Psoas muscle (tissue), 8 donors: ENCODE measurements at regions of chr1 and their contacts with region 1.

Region 1: GRCh38 chr1:94926915-94927404 is at the start of gene CNN3:
- DNase-seq: peak; percentile 91 to 92
- ATAC-seq: peak; percentile 80 to 88 (median 88)
- H3K4me3 ChIP-seq: peak within 1 kb of the TSS; percentile 71
- H3K27ac ChIP-seq: peak within 1 kb of the TSS; percentile 80
- H3K4me1 ChIP-seq: peaks cover 5% of the 10 kb centered on the region
- H3K27me3 ChIP-seq: peaks cover 0 to 67% (median 21%) of the 10 kb centered on the region in 3 donors
- CTCF ChIP-seq: no peak
- total RNA-seq, gene CNN3: 14.7 to 46.2 (median 34.0) TPM

Region 2: DNA sequence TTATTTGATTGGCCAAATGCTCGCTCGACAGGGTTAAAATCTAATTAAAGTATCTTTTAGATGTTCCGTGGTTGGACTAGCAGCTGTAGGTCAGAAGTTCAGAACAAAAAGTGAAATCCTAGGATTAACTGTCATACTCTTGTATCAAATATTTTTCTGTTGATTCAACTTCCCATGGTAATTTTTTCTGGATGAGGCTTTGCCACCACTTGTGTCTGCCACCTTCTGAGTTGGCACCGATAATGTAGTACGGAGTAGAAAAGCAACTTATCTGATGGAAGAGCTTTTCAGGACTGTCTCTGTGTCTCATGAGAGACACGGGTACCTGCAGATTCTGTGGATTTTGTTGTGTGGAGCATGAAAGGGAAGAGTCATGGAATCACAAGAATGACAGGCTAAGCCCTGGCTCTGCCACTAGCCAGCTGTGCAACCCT is 44.5 kb after region 1 on chr1:
- intact Hi-C with region 1: loop called in 1 of 2 experiments (anchors 5 kb)
- DNase-seq: no peak
- ATAC-seq: peak in 3 of 4 donors; percentile 28 to 58 (median 46)
- H3K4me3 ChIP-seq: no peak overlapping the region
- H3K27ac ChIP-seq: no peak overlapping the region
- H3K4me1 ChIP-seq: no peaks in the 10 kb centered on the region
- H3K27me3 ChIP-seq: no peaks in the 10 kb centered on the region
- CTCF ChIP-seq: no peak

Region 3: GRCh38 chr1:95023399-95024043 is 96.6 kb after region 1 on chr1:
- intact Hi-C with region 1: loop called in 1 of 2 experiments (anchors 2 kb)
- DNase-seq: no peak
- ATAC-seq: peak in 2 of 4 donors; percentile 42 to 49
- H3K4me3 ChIP-seq: no peak overlapping the region
- H3K27ac ChIP-seq: peak overlapping the region; percentile 34
- H3K4me1 ChIP-seq: peaks cover 5% of the 10 kb centered on the region
- H3K27me3 ChIP-seq: no peaks in the 10 kb centered on the region
- CTCF ChIP-seq: no peak

Region 4: GRCh38 chr1:95043141-95043980 is 116.4 kb after region 1 on chr1:
- intact Hi-C with region 1: loop called in 1 of 2 experiments (anchors 5 kb)
- DNase-seq: peak; percentile 80 to 81
- ATAC-seq: peak; percentile 85 to 96 (median 93)
- H3K4me3 ChIP-seq: no peak overlapping the region
- H3K27ac ChIP-seq: no peak overlapping the region
- H3K4me1 ChIP-seq: no peaks in the 10 kb centered on the region
- H3K27me3 ChIP-seq: no peaks in the 10 kb centered on the region
- CTCF ChIP-seq: peak; percentile 99